ENCODE measurements at regions of chr3 and their contacts with region 1.

Region 1: GRCh38 chr3:184250167-184250828 is 826 bp downstream of the EEF1AKMT4 start:
- DNase-seq: peak; percentile 81 to 88 (median 83)
- H3K4me3 ChIP-seq: peak overlapping the region; percentile 85 to 88 (median 87)
- H3K4me3 Mint-ChIP-seq: peak overlapping the region; percentile 88 to 90
- H3K27ac ChIP-seq: peak overlapping the region in 1 of 2 donors; percentile 87
- H3K27ac Mint-ChIP-seq: peak overlapping the region in 4 of 7 donors; percentile 6 to 96 (median 60)
- H3K4me1 ChIP-seq: peaks cover 15 to 24% of the 10 kb centered on the region in 2 donors
- H3K4me1 Mint-ChIP-seq: peaks cover 11% of the 10 kb centered on the region
- H3K27me3 ChIP-seq: no peaks in the 10 kb centered on the region
- H3K27me3 Mint-ChIP-seq: peaks cover 0 to 3% (median 0%) of the 10 kb centered on the region in 3 donors
- CTCF ChIP-seq: peak; percentile 87

Region 2: DNA sequence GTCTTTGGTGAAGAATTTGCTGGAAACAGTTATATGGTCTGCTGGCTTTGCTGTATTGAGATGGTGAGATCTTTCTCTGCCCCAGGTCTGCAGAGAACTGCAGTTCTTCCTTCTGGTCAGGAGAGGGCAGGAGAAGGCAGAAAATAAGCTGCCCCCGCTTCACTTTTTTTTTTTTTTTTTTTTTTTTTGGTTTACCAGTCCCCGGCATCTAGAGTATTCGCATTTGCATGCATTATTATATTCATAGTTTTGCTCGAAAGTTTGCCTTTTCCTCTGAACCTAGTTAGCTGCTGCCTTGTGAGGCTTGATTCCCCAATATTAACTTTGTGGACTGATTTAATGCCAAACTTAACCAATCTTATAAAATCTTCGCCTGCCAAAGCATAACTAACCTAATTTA is 355.0 kb before region 1 on chr3:
- intact Hi-C with region 1: loop called in 1 of 2 experiments (anchors 10 kb)
- DNase-seq: peak; percentile 44 to 50 (median 47)
- H3K4me3 ChIP-seq: no peak overlapping the region
- H3K4me3 Mint-ChIP-seq: no peak overlapping the region
- H3K27ac ChIP-seq: no peak overlapping the region
- H3K27ac Mint-ChIP-seq: no peak overlapping the region
- H3K4me1 ChIP-seq: no peaks in the 10 kb centered on the region
- H3K4me1 Mint-ChIP-seq: peaks cover 5% of the 10 kb centered on the region
- H3K27me3 ChIP-seq: no peaks in the 10 kb centered on the region
- H3K27me3 Mint-ChIP-seq: peaks cover 4 to 11% (median 10%) of the 10 kb centered on the region in 3 donors
- CTCF ChIP-seq: peak; percentile 86

Region 3: GRCh38 chr3:184174646-184175492 is 75.4 kb before region 1 on chr3 and contains the start of gene AP2M1:
- intact Hi-C with region 1: loop called in 1 of 2 experiments (anchors 2 kb)
- DNase-seq: peak; percentile 97 to 99 (median 98)
- H3K4me3 ChIP-seq: peak within 1 kb of the TSS; percentile 82 to 98 (median 91)
- H3K4me3 Mint-ChIP-seq: peak within 1 kb of the TSS; percentile 94 to 97
- H3K27ac ChIP-seq: peak within 1 kb of the TSS; percentile 17 to 84
- H3K27ac Mint-ChIP-seq: peak within 1 kb of the TSS; percentile 76 to 94 (median 86)
- H3K4me1 ChIP-seq: peaks cover 27 to 33% of the 10 kb centered on the region in 2 donors
- H3K4me1 Mint-ChIP-seq: peaks cover 34% of the 10 kb centered on the region
- H3K27me3 ChIP-seq: no peaks in the 10 kb centered on the region
- H3K27me3 Mint-ChIP-seq: peaks cover 0 to 3% (median 3%) of the 10 kb centered on the region in 3 donors
- CTCF ChIP-seq: no peak
- polyA plus RNA-seq, gene AP2M1: 283 to 327 (median 295) TPM

Region 4: DNA sequence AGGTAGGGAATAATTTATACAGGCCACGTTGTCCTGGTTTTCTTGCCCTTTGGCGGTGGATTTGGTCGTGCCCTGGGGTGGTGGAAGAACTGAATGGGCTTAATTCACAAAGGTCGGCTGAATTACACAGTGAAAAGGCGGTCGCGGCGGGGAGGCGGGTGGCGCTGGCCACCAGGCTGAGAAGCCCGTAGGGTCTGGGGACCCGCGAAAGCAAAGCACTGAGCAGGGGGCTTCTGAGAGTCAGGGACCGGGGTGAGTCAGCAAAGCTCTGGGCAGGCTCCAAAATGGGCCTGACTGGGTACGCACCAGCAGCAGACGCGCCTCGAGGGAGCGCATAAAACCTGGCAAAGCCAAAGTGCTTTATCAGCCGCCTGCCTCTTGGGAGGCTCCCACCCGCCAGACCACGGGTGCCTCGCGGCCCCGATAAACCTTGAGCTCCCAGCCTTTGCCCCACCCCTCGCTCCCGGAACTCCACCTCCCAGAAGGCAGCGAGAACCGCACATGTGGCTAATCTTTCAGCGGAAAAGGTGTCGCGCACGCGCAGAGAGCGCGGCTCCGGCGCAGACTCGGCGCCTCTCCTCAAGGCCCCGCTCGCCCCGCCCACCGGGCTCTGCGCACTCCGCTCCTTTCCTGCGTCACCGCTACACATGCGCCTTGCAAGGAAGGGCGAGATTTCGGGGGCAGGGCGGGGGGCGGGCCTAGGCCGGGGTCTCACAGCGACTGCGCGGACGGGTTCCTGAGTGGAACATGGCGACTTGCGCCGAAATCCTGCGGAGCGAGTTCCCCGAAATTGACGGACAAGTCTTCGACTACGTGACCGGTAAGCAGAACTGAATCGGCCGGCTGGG is 64.6 kb before region 1 on chr3 and contains the start of gene ABCF3:
- intact Hi-C with region 1: loop called (anchors 5 kb)
- DNase-seq: peak; percentile 98 to 99 (median 99)
- H3K4me3 ChIP-seq: peak within 1 kb of the TSS; percentile 60 to 94 (median 83)
- H3K4me3 Mint-ChIP-seq: peak within 1 kb of the TSS; percentile 97 to 98
- H3K27ac ChIP-seq: peak within 1 kb of the TSS; percentile 82 to 89
- H3K27ac Mint-ChIP-seq: peak within 1 kb of the TSS; percentile 95 to 99 (median 96)
- H3K4me1 ChIP-seq: peaks cover 17 to 25% of the 10 kb centered on the region in 2 donors
- H3K4me1 Mint-ChIP-seq: peaks cover 23% of the 10 kb centered on the region
- H3K27me3 ChIP-seq: no peaks in the 10 kb centered on the region
- H3K27me3 Mint-ChIP-seq: no peaks in the 10 kb centered on the region
- CTCF ChIP-seq: no peak
- polyA plus RNA-seq, gene ABCF3: 13.5 to 74.8 (median 13.9) TPM

Region 5: GRCh38 chr3:184229394-184230080 is 20.8 kb before region 1 on chr3 and contains the start of gene VWA5B2:
- intact Hi-C with region 1: no loop called
- DNase-seq: no peak
- H3K4me3 ChIP-seq: no peak within 1 kb of the TSS
- H3K4me3 Mint-ChIP-seq: peak within 1 kb of the TSS in 1 of 2 donors; percentile 76
- H3K27ac ChIP-seq: no peak within 1 kb of the TSS
- H3K27ac Mint-ChIP-seq: no peak within 1 kb of the TSS
- H3K4me1 ChIP-seq: peaks cover 4 to 8% of the 10 kb centered on the region in 2 donors
- H3K4me1 Mint-ChIP-seq: peaks cover 8% of the 10 kb centered on the region
- H3K27me3 ChIP-seq: peaks cover 50 to 70% of the 10 kb centered on the region in 2 donors
- H3K27me3 Mint-ChIP-seq: peaks cover 66 to 89% (median 68%) of the 10 kb centered on the region in 3 donors
- CTCF ChIP-seq: no peak
- polyA plus RNA-seq, gene VWA5B2: 0.32 TPM in 1 of 3 donors, not detected in the others

Region 6: GRCh38 chr3:184298759-184299496 is 48.6 kb after region 1 on chr3 and contains the start of gene PSMD2:
- intact Hi-C with region 1: loop called (anchors 5 kb)
- DNase-seq: peak; percentile 94 to 95 (median 95)
- H3K4me3 ChIP-seq: peak within 1 kb of the TSS; percentile 82 to 90 (median 83)
- H3K4me3 Mint-ChIP-seq: peak within 1 kb of the TSS; percentile 91 to 97
- H3K27ac ChIP-seq: peak within 1 kb of the TSS; percentile 53 to 71
- H3K27ac Mint-ChIP-seq: peak within 1 kb of the TSS; percentile 86 to 95 (median 91)
- H3K4me1 ChIP-seq: peaks cover 16 to 19% of the 10 kb centered on the region in 2 donors
- H3K4me1 Mint-ChIP-seq: peaks cover 21% of the 10 kb centered on the region
- H3K27me3 ChIP-seq: no peaks in the 10 kb centered on the region
- H3K27me3 Mint-ChIP-seq: peaks cover 0 to 3% (median 0%) of the 10 kb centered on the region in 3 donors
- CTCF ChIP-seq: no peak
- polyA plus RNA-seq, gene PSMD2: 138 to 186 (median 167) TPM

Region 7: GRCh38 chr3:184314363-184314699 is 64.0 kb after region 1 on chr3 and contains the start of gene EIF4G1:
- intact Hi-C with region 1: loop called in 1 of 2 experiments (anchors 5 kb)
- DNase-seq: peak; percentile 89 to 96 (median 91)
- H3K4me3 ChIP-seq: peak within 1 kb of the TSS; percentile 91 to 94 (median 93)
- H3K4me3 Mint-ChIP-seq: peak within 1 kb of the TSS; percentile 89 to 93
- H3K27ac ChIP-seq: peak within 1 kb of the TSS; percentile 91 to 94
- H3K27ac Mint-ChIP-seq: peak within 1 kb of the TSS; percentile 82 to 97 (median 93)
- H3K4me1 ChIP-seq: peaks cover 48 to 52% of the 10 kb centered on the region in 2 donors
- H3K4me1 Mint-ChIP-seq: peaks cover 32% of the 10 kb centered on the region
- H3K27me3 ChIP-seq: no peaks in the 10 kb centered on the region
- H3K27me3 Mint-ChIP-seq: peaks cover 0 to 3% (median 0%) of the 10 kb centered on the region in 3 donors
- CTCF ChIP-seq: no peak
- polyA plus RNA-seq, gene EIF4G1: 13.9 to 119 (median 24.2) TPM

Measured in CD14-positive monocyte (primary cell).